ENCODE measurements at regions of chr3 and their contacts with region 1.

Region 1: DNA sequence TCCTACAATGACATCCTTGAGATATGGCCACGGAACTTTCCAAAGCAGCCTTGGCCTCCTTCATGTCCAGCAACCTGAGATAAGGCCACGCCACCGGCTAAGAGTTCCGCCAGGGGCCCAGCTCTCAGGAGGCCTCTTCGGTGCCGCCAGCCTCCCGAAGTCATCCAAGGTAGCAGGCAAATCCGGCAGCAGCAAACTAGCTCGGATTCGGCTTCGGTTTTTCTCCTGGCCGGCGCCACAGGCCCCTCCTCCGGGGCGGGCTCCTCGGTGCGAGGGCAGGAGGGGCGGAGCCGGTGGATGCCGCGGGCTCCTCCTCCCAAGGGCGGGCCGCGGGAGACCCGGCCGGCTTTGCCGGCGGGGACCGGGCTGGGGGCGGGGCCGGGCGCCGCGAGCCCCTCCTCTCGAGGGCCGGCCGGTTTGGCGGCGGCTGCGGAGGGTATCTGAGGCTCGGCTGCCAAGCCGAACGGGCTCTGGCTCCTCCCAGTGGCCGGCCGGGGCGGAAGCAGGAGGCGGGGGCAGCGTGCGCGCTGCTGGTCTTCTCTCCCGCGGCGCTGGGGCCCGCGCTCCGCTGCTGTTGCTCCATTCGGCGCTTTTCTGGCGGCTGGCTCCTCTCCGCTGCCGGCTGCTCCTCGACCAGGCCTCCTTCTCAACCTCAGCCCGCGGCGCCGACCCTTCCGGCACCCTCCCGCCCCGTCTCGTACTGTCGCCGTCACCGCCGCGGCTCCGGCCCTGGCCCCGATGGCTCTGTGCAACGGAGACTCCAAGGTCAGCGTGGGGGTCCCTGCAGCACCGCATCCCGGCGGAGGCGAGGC is at the start of gene GMPS:
- DNase-seq: peak; percentile 97
- H3K4me3 ChIP-seq: peak within 1 kb of the TSS; percentile 84 to 99 (median 92)
- H3K27ac ChIP-seq: peak within 1 kb of the TSS; percentile 94 to 100 (median 98)
- H3K4me1 ChIP-seq: peaks cover 0 to 34% (median 25%) of the 10 kb centered on the region in 4 donors
- H3K27me3 ChIP-seq: no peaks in the 10 kb centered on the region
- CTCF ChIP-seq: peak in 1 of 4 experiments; percentile 43
- EP300 ChIP-seq: no peak
- POLR2A ChIP-seq: peak; percentile 35 to 58
- total RNA-seq, gene GMPS: 22.8 to 45.7 (median 29.0) TPM

Region 2: GRCh38 chr3:155462674-155463073 is 407.7 kb before region 1 on chr3:
- intact Hi-C with region 1: no loop called
- DNase-seq: no peak
- H3K4me3 ChIP-seq: no peak overlapping the region
- H3K27ac ChIP-seq: no peak overlapping the region
- H3K4me1 ChIP-seq: no peaks in the 10 kb centered on the region
- H3K27me3 ChIP-seq: no peaks in the 10 kb centered on the region
- CTCF ChIP-seq: no peak
- EP300 ChIP-seq: no peak
- POLR2A ChIP-seq: no peak

Region 3: DNA sequence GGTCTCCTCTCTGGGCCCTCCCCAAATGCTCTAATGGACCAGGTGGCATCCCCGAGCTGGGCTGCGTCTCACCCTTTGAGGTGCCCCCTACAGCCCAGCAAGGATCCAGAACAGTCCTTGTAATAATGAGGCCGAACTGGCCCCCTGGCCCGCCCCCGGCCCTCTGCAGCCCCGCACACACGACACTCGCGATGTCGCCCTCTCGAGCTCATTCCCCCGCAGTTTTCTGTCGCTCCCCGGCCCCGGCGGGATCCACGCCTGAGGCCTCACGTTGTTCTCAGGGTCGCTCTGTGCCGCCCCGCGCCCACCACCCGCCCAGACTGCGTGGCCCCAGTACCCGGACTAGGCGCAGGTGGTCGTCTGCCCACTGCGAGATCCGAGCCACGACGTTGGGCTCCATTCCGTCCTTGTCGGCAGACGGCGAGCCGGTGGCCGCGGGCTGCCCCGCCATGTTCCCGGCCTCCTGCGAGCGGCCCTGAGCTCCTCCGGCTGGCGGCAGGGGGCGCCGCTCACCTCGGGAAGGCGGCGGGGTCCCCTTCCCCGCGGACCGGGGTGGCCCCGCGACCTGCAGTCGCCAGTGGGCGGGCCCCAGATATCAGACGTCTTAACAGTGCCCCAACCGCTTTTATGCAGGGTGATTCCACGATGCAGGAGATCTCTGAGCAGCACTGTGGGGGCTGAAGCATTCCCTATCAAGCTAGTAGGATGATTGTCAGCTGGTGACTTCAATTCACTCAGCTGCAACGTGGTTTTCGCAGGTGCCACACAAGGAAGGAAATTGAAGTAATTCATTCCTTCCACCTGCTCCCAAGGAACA is 64.3 kb before region 1 on chr3 and contains the start of gene C3orf33:
- intact Hi-C with region 1: loop called (anchors 5 kb)
- DNase-seq: peak; percentile 77
- H3K4me3 ChIP-seq: peak within 1 kb of the TSS; percentile 79 to 87 (median 87)
- H3K27ac ChIP-seq: peak within 1 kb of the TSS; percentile 86 to 89 (median 86)
- H3K4me1 ChIP-seq: peaks cover 0 to 21% (median 10%) of the 10 kb centered on the region in 4 donors
- H3K27me3 ChIP-seq: no peaks in the 10 kb centered on the region
- CTCF ChIP-seq: peak; percentile 51 to 91 (median 64)
- EP300 ChIP-seq: no peak
- POLR2A ChIP-seq: no peak
- total RNA-seq, gene C3orf33: 3.6 to 8.6 (median 5.1) TPM

Measured in sigmoid colon (tissue), 7 donors.